GM10248 (cell line): ENCODE measurements at regions of chr9 and their contacts with region 1.

Region 1: DNA sequence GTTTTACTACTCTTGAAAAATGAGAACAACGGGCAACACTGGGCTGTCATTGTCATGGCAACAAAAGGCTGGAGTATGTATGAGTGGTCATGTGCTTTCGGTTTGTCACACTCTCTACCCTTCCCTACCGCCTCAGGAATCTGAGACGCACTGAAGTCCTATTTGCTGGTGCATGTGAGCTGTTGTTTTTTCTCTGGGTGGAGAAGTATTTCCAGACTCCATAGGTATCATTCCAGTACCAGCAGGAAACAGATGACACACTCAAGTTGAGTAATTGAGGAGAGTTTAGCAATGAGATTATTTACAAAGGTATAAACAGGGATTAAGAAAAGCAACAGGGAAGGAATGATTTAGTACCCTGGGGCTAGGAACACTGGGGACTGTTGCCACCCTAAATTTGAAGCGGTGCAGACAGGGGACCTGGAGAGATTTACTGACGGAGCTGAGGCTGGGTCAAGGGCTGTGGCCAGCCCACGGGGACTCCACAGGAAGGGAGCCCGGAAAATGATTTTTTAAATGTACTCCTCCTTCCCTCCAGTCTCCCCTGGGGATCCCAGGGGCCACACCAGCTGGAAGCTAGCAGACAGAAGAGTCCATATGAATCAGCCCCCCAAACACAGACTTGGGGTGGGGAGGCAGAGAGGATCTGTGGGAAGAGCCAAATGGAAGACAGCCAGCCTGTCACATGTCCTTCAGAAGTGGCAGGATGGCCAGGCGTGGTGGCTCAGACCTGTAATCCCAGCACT is 13.3 kb upstream of the ZBTB43 start:
- DNase-seq: no peak
- CTCF ChIP-seq: no peak

Region 2: DNA sequence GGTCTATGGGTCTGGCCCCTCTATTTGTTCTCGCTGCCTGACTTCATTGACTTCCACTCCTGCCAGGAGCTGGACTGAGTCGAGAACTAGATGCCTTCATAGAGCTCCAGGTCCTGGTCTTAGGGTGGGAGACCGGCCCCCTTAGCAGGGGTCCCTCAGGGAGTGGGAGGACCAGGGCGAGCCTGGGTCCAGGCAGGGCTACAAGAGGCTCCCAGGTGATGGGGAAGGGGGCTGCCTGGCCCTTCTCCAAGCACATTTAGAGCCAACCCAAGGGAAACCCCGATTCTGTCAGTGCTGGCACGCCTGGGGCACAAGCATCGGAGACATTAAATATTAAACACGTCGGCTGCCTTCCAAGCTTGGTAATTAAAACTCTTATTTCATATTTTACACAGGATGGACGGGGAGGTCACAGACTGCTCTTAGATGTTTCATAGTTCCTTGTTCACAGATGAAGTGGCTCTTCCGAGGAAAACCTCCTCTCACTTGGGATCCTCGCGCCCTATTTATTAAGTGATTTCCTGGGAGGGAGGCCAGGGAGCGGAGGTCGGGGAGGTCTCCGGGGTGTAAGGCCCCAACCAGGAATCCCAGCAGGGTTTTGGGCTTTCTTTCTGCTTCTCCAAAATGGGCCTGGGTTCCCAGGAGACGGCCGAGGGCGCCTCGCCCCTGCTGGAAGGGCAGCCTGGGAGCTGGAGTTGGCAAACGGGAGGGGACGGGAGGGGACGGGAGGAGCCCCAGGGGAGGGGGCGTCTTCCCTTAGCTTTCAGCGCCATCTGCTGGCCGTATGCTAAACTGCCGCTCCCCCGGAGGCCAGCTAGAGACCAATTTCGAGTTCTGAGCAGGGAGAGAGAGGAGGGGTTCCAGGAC is 10.2 kb before region 1 on chr9:
- CTCF ChIA-PET with region 1: interaction called, 13 read pairs
- POLR2A ChIA-PET with region 1: no interaction called
- DNase-seq: peak; percentile 84
- CTCF ChIP-seq: peak; percentile 97

Region 3: DNA sequence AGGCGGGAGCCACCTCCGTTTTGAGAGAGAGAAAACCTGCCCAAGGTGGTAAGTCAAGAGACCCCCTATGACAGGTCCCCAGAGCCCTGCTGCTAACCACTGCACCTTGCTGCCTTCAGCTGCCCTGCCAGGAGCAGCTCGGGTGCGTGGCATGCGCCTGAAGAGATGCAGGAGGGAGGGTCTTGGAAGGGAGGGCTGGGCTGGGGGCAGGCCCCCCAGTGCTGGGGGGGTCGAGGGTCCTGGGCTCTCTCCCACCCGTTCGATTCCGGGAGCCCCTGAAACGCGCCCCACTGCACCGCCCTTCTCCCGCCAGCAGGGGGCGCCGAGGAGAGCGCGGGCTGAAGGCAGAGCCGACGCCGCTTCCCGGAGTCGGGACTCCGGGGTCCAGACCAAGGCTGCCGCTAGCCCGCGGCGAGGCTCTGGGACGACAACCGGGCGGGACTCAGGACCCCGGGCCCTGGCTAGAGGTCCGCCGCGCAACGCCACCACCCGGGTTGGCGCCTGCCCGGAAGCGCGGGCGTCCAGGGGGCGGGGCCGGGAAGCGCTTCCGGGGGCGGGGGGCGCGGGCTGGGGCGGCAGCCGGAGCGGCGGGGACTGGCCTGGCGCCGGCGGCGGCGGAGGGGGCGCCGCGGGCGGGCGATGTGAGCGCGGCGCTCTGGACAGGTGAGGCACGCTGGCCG is 68.6 kb after region 1 on chr9 and contains the start of gene ZBTB34:
- CTCF ChIA-PET with region 1: no interaction called
- POLR2A ChIA-PET with region 1: no interaction called
- DNase-seq: peak; percentile 85
- CTCF ChIP-seq: peak; percentile 99